Adrenal gland (tissue), 19 donors: ENCODE measurements at regions of chr9 and their contacts with region 1.

Region 1: GRCh38 chr9:125561509-125562217 is 145.3 kb downstream of the MAPKAP1 start:
- DNase-seq: no peak
- H3K4me3 ChIP-seq: no peak overlapping the region
- H3K27ac ChIP-seq: no peak overlapping the region
- H3K4me1 ChIP-seq: peaks cover 0 to 7% of the 10 kb centered on the region in 2 donors
- H3K27me3 ChIP-seq: no peaks in the 10 kb centered on the region
- CTCF ChIP-seq: no peak
- POLR2A ChIP-seq: no peak

Region 2: DNA sequence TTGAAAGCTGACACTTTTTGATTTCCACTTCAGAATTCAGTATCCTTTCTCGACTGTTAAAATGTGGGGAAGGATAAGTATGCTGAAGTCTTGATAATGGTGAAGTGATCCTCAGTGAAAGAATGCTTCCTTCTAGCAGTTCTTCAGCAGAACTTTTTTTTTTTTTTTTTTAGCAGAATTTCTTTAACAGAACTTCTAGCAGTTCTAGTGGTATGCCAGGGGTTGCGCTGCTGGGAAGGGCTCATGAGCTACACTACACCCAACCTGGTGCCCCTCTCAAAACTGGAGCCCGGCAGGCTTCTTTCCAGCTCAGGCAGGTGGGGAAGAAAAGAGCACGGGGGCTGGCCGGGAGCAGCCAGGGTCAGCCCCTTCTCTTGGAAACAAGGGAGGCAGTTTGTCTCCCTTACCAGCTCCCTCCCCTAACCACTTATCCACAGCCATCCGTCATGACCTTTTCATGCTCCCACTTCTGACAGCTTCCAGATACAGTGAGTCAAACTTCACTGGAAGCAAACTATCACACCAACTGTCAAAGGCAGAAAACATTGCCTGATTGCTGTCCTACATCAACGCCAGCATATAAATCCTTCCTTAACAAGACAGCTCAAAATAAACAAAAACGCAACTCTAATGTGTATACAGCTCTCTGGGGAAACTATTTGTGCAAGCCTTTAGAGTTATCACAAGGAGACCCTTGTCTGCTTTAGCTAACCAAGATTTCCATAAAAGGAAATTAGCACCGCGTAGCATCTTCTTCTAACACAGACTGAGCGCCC is 88.5 kb before region 1 on chr9:
- intact Hi-C with region 1: no loop called
- DNase-seq: peak in 6 of 7 donors; percentile 47 to 68 (median 54)
- H3K4me3 ChIP-seq: no peak overlapping the region
- H3K27ac ChIP-seq: peak overlapping the region in 3 of 5 donors; percentile 68 to 74 (median 72)
- H3K4me1 ChIP-seq: peaks cover 15 to 23% of the 10 kb centered on the region in 2 donors
- H3K27me3 ChIP-seq: no peaks in the 10 kb centered on the region
- CTCF ChIP-seq: no peak
- POLR2A ChIP-seq: no peak

Region 3: GRCh38 chr9:125631391-125632085 is 69.9 kb after region 1 on chr9:
- intact Hi-C with region 1: loop called in 1 of 2 experiments (anchors 5 kb)
- DNase-seq: peak; percentile 25 to 72 (median 37)
- H3K4me3 ChIP-seq: no peak overlapping the region
- H3K27ac ChIP-seq: no peak overlapping the region
- H3K4me1 ChIP-seq: peaks cover 24 to 27% of the 10 kb centered on the region in 2 donors
- H3K27me3 ChIP-seq: no peaks in the 10 kb centered on the region
- CTCF ChIP-seq: peak; percentile 39 to 76 (median 69)
- POLR2A ChIP-seq: no peak

Region 4: DNA sequence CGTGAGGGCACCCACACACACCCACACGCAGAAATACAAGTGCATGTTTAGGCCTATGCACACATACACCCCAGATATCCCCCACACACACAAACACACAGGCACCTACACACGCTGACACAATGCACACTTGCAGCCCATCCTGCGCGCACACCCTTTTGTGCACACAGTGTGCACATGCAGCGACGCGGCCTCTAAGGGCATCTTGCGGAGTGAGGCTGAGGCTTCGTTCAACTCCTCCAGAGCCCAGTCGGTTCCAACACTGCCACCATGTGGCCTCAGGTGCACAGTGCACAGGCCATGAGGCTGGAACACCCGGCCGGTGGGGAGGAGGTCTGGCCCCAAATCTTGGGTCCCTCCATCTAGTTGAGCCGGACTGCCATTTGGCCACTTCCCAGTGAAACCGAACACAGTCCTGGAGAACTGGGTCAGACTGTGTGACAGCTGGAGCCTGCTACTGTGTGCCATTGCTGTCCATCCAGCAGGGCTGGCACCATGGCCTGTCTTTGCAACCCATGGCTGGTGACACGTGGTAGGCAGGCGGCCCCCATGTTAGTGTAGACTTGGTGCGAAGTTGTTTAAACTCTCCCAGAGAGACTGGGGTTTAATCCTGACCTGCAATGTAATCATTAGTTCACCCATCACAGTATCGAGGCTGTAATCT is 667.2 kb after region 1 on chr9:
- intact Hi-C with region 1: loop called in 1 of 2 experiments (anchors 10 kb)
- DNase-seq: peak; percentile 64 to 88 (median 75)
- H3K4me3 ChIP-seq: no peak overlapping the region
- H3K27ac ChIP-seq: no peak overlapping the region
- H3K4me1 ChIP-seq: no peaks in the 10 kb centered on the region
- H3K27me3 ChIP-seq: no peaks in the 10 kb centered on the region
- CTCF ChIP-seq: peak; percentile 87 to 95 (median 91)
- POLR2A ChIP-seq: no peak